Psoas muscle (tissue), 8 donors: ENCODE measurements at regions of chr2 and their contacts with region 1.

Region 1: DNA sequence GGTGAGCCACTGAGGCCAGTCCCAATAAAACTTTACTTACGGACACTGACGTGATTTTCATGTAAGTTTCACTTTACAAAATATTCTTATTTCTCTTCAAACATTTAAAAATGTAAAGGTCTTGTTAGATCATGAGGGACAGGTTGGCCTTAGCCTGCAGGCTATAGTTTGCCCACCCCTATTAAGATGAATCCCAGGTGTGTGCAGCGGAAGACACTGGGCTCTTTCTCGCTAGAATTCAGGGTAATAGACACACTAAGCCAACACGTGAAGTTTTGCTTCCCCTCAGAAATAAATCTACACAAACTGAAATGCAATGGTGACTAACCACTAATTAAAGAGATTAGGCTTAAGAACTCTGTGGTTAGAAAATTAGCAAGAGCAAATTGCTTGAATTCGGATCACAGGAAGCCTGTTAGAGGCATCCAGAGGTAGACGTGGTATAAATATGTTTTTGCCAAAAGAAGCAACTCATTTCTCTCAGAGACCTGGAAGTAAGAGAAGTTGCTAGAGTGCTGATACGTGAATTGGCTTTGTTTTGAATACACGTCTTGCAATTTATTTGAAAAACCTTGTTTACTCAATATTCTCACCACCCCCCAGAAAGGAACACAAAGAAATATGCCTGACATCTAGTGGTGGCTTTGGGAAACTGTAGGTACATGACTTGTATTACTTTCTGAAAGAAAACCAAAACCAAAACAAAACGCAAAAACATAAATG is 151.6 kb downstream of the DTNB start:
- DNase-seq: no peak
- ATAC-seq: peak; percentile 40 to 86 (median 60)
- H3K4me3 ChIP-seq: peak overlapping the region; percentile 44
- H3K27ac ChIP-seq: no peak overlapping the region
- H3K4me1 ChIP-seq: no peaks in the 10 kb centered on the region
- H3K27me3 ChIP-seq: no peaks in the 10 kb centered on the region
- CTCF ChIP-seq: peak; percentile 79

Region 2: DNA sequence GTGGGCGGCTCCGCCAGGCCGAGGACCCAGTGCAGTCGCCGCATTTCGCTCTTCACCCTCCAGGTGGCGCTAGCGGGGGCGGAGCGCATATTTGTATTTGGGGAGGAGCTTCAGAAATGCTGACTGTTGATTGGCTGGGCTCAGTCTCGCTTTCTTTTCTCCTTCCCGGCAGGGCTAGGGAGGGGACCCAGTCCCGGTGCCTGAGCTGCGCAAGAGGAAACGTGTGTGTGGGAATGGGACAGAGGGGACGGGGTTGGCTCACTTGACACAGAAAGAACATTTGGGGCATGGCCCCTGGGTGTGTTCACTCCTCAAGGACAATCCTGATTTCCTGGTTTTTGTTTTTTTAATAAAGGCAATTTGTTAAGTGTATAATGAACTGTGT is 159.8 kb before region 1 on chr2:
- intact Hi-C with region 1: loop called in 1 of 2 experiments (anchors 5 kb)
- DNase-seq: peak; percentile 88 to 94
- ATAC-seq: peak; percentile 98 to 100 (median 98)
- H3K4me3 ChIP-seq: peak overlapping the region; percentile 55
- H3K27ac ChIP-seq: peak overlapping the region; percentile 61
- H3K4me1 ChIP-seq: peaks cover 5% of the 10 kb centered on the region
- H3K27me3 ChIP-seq: no peaks in the 10 kb centered on the region
- CTCF ChIP-seq: peak; percentile 95

Region 3: DNA sequence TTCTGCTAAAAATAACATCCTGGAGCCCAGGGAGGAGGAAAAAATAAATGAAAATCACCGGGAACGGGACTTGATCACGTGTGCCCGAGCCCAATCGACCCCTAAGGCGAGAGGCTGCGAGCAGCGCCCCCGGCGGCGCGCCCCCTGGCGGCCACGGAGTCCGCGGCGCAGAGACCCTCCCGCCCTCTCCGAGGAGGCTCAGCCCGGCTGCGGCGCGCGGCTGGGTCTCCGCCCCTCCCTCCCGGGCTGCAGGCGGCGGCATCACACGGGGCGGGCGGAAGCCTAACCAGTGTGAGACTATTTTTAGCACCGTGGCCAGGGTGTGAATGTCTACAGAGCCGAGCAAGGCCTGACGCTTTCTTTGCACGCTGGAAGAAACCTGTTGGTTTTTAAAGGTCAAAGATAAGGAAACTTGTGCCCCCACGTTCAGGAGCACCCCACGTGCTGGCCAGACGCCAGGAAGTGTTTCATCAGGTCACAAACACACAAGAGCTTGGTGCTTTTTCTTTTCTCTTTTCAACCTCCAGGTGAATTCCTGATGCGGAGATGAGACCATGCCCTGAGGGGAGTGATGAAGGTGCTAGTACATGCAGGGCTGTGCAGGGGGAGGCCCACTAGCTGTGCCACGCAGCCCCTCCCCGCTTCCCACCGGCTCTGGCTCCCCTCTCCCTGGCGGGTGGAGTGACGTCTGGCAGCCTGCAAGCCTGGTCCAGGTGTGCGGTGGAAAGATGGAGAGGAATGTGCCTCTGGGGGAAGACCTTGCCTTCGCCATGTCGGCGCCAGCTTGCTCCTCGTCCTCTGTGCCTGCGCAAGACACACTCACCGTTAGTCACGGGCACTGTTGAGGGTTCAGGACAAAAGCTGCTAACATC is 144.8 kb before region 1 on chr2:
- intact Hi-C with region 1: loop called in 1 of 2 experiments (anchors 10 kb)
- DNase-seq: peak; percentile 86 to 94
- ATAC-seq: peak; percentile 88 to 94 (median 92)
- H3K4me3 ChIP-seq: peak overlapping the region; percentile 53
- H3K27ac ChIP-seq: peak overlapping the region; percentile 53
- H3K4me1 ChIP-seq: peaks cover 40% of the 10 kb centered on the region
- H3K27me3 ChIP-seq: no peaks in the 10 kb centered on the region
- CTCF ChIP-seq: peak; percentile 98